Vagina (tissue), 2 donors: ENCODE measurements at regions of chr22 and their contacts with region 1.

Region 1: DNA sequence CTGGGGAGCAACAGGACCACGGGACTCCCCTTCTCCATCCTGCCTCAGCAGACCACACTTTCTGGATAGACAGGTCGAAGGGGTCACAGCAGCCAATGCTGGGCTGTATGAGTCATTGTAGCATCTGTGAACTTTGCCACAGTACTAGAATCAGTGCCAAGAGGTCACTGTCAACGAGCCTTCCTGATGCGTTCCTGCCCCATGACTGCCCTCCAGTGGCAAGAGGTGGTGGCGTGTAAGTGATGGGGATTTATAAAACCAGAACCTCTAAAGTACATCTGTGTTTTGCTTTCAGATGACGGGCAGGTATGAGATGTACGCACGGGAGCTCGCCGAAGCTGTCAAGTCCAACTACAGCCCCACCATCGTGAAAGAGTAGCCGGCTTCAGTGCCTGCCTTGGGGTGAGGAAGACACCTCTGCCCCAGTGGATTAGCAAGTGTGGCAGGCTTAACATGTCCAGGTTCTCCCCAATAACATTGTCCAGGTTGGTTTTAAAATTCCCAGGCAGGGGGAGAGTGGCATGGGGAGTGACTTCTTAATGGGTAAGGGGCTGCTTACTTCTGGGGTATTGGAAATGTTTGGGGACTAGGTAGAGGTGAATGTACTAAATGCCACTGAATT is 29.4 kb downstream of the GUCD1 start:
- DNase-seq: no peak
- H3K4me3 ChIP-seq: no peak overlapping the region
- H3K27ac ChIP-seq: no peak overlapping the region
- H3K4me1 ChIP-seq: peaks cover 6% of the 10 kb centered on the region
- H3K27me3 ChIP-seq: no peaks in the 10 kb centered on the region
- CTCF ChIP-seq: peak; percentile 52 to 86 (median 58)
- POLR2A ChIP-seq: no peak

Region 2: DNA sequence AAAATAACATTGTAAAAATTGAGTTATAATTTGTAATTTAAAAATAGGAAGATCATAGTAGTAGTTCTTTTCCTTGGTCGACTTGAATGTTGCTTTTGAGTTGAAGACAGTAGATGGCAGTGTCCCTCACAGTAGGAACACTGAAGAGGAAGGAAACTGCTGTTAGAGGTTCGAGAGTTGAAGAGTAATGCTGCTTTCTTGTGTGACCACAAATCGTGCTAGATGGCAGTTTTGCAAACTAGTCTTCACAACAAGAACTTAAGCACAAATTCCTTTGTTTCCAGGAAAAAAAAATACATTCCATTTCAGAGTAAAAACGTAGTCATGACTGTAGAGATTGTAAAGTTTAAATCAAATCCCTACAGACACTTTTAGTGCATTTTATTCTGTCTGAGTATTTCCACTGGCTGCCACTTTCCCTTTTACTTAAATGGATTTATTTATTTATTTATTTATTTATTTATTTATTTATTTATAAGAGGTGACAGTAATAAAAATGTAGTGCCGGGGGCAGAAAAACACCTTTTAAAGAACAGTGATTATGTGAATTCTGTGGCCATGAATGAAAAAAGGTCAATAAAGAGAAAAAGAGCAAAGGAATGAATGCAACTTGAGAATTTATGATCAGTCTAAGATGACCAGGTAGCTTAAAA is 200.3 kb before region 1 on chr22:
- intact Hi-C with region 1: loop called (anchors 10 kb)
- DNase-seq: no peak
- H3K4me3 ChIP-seq: no peak overlapping the region
- H3K27ac ChIP-seq: no peak overlapping the region
- H3K4me1 ChIP-seq: peaks cover 24% of the 10 kb centered on the region
- H3K27me3 ChIP-seq: no peaks in the 10 kb centered on the region
- CTCF ChIP-seq: peak in 1 of 3 experiments; percentile 49
- POLR2A ChIP-seq: no peak

Region 3: DNA sequence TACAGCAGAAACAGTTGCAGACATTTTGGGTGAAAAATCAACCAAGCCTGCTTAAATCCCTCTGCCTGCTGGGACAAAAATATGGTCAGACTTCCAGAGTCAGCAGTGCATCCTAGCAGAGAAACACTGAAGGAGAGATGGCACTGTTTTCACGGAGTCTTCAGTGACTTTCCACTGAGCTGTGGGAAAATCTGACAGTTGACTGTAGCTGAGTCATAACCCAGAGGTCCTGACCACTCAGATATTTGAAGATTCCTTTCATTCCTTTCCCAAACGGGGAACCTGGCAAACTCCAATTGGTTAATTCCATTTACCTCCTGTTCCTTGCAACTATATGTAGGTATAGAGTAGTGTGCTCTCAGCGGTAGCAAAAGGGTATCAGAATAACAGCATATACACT is 51.3 kb before region 1 on chr22:
- intact Hi-C with region 1: no loop called
- DNase-seq: no peak
- H3K4me3 ChIP-seq: no peak overlapping the region
- H3K27ac ChIP-seq: no peak overlapping the region
- H3K4me1 ChIP-seq: no peaks in the 10 kb centered on the region
- H3K27me3 ChIP-seq: no peaks in the 10 kb centered on the region
- CTCF ChIP-seq: no peak
- POLR2A ChIP-seq: no peak